IMR-90 (cell line): ENCODE measurements at regions of chr11 and their contacts with region 1.

Region 1: GRCh38 chr11:47863189-47863892 is 15.2 kb upstream of the NUP160 start:
- DNase-seq: peak; percentile 92
- ATAC-seq: peak; percentile 78
- H3K4me3 ChIP-seq: no peak overlapping the region
- H3K27ac ChIP-seq: peak overlapping the region; percentile 31; the same call in 1 of the 2 replicates
- H3K4me1 ChIP-seq: peaks cover 5% of the 10 kb centered on the region
- H3K27me3 ChIP-seq: no peaks in the 10 kb centered on the region
- CTCF ChIP-seq: no peak
- POLR2A ChIP-seq: no peak
- RAD21 ChIP-seq: no peak

Region 2: DNA sequence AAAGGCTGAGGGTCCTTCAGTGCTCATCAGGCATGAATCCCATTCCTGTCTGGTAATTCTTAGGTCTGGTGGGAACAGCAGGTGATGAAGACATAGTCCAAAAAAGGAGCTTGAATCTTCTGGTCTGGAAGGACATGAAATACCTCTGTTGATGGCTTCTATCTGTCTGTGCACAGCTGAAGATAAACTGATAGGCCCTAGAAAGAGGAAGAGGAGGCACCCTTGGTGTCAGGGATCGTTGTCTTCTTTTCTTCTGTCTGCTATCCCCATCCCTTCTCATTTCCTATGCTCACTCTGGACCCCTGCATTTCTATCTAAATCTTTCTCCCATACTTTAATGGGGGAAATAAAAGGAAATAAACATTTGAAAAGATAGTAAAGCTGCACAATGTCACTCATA is 157.6 kb before region 1 on chr11:
- CTCF ChIA-PET with region 1: no interaction called
- POLR2A ChIA-PET with region 1: no interaction called
- dilution Hi-C with region 1: no loop called
- in situ Hi-C with region 1: no loop called
- intact Hi-C with region 1: no loop called
- DNase-seq: no peak
- ATAC-seq: no peak
- H3K4me3 ChIP-seq: no peak overlapping the region
- H3K27ac ChIP-seq: no peak overlapping the region
- H3K4me1 ChIP-seq: no peaks in the 10 kb centered on the region
- H3K27me3 ChIP-seq: no peaks in the 10 kb centered on the region
- CTCF ChIP-seq: no peak
- POLR2A ChIP-seq: no peak
- RAD21 ChIP-seq: no peak

Region 3: GRCh38 chr11:47879259-47880158 is 16.2 kb after region 1 on chr11:
- CTCF ChIA-PET with region 1: no interaction called
- POLR2A ChIA-PET with region 1: no interaction called
- dilution Hi-C with region 1: no loop called
- in situ Hi-C with region 1: no loop called
- intact Hi-C with region 1: no loop called
- DNase-seq: no peak
- ATAC-seq: no peak
- H3K4me3 ChIP-seq: no peak overlapping the region
- H3K27ac ChIP-seq: no peak overlapping the region
- H3K4me1 ChIP-seq: no peaks in the 10 kb centered on the region
- H3K27me3 ChIP-seq: no peaks in the 10 kb centered on the region
- CTCF ChIP-seq: no peak
- POLR2A ChIP-seq: no peak
- RAD21 ChIP-seq: no peak

Region 4: GRCh38 chr11:47917643-47918369 is 54.5 kb after region 1 on chr11:
- CTCF ChIA-PET with region 1: no interaction called
- POLR2A ChIA-PET with region 1: no interaction called
- dilution Hi-C with region 1: no loop called
- in situ Hi-C with region 1: no loop called
- intact Hi-C with region 1: loop called (anchors 2 kb)
- DNase-seq: peak; percentile 98
- ATAC-seq: peak; percentile 98
- H3K4me3 ChIP-seq: peak overlapping the region; percentile 6; the same call in 1 of the 2 replicates
- H3K27ac ChIP-seq: peak overlapping the region; percentile 74; the same call in 1 of the 2 replicates
- H3K4me1 ChIP-seq: peaks cover 11% of the 10 kb centered on the region
- H3K27me3 ChIP-seq: no peaks in the 10 kb centered on the region
- CTCF ChIP-seq: no peak
- POLR2A ChIP-seq: no peak
- RAD21 ChIP-seq: no peak

Region 5: GRCh38 chr11:47943721-47944557 is 80.6 kb after region 1 on chr11:
- CTCF ChIA-PET with region 1: no interaction called
- POLR2A ChIA-PET with region 1: no interaction called
- dilution Hi-C with region 1: no loop called
- in situ Hi-C with region 1: no loop called
- intact Hi-C with region 1: no loop called
- DNase-seq: no peak
- ATAC-seq: no peak
- H3K4me3 ChIP-seq: no peak overlapping the region
- H3K27ac ChIP-seq: no peak overlapping the region
- H3K4me1 ChIP-seq: peaks cover 10% of the 10 kb centered on the region
- H3K27me3 ChIP-seq: no peaks in the 10 kb centered on the region
- CTCF ChIP-seq: no peak
- POLR2A ChIP-seq: no peak
- RAD21 ChIP-seq: no peak